CD4-positive, alpha-beta T cell (primary cell): ENCODE measurements at regions of chr17 and their contacts with region 1.

Region 1: GRCh38 chr17:64145757-64146417 is 15.9 kb upstream of the ERN1 start:
- DNase-seq: peak; percentile 91 to 99 (median 95)
- ATAC-seq: peak; percentile 88
- H3K4me3 ChIP-seq: peak overlapping the region; percentile 78
- H3K4me3 Mint-ChIP-seq: no peak overlapping the region
- H3K27ac ChIP-seq: peak overlapping the region; percentile 73 to 91
- H3K27ac Mint-ChIP-seq: no peak overlapping the region
- H3K4me1 ChIP-seq: peaks cover 21% of the 10 kb centered on the region
- H3K4me1 Mint-ChIP-seq: peaks cover 19% of the 10 kb centered on the region
- H3K27me3 ChIP-seq: no peaks in the 10 kb centered on the region
- H3K27me3 Mint-ChIP-seq: no peaks in the 10 kb centered on the region
- CTCF ChIP-seq: no peak

Region 2: DNA sequence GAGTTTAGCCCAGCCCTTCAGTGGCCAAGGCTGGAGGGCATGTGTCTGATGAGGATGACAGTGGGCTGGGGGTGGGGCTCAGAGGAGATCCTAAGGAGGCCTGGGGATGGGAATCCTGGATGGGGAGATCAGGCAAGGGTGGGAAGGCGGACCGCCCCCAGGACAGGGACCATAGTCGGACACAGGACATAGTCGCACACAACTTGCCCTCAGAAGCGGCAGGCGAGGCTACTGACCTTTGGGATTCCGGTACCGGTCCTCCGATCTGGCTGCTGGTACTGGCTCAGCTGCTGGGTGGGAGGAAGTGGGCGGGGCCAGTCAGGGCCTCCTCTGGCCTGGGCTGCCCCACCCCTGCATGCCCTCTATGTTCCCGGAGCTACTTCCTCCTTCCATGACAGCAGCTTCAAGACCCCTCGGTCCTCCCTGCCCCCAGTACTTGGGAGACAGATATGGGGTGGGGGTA is 214.8 kb before region 1 on chr17:
- CTCF ChIA-PET with region 1: no interaction called
- POLR2A ChIA-PET with region 1: interaction called, 20 read pairs
- intact Hi-C with region 1: no loop called
- DNase-seq: peak; percentile 24 to 85 (median 60)
- ATAC-seq: peak; percentile 78
- H3K4me3 ChIP-seq: peak overlapping the region; percentile 69
- H3K4me3 Mint-ChIP-seq: peak overlapping the region; percentile 92
- H3K27ac ChIP-seq: peak overlapping the region; percentile 60 to 63
- H3K27ac Mint-ChIP-seq: peak overlapping the region; percentile 92
- H3K4me1 ChIP-seq: peaks cover 33% of the 10 kb centered on the region
- H3K4me1 Mint-ChIP-seq: peaks cover 26% of the 10 kb centered on the region
- H3K27me3 ChIP-seq: no peaks in the 10 kb centered on the region
- H3K27me3 Mint-ChIP-seq: no peaks in the 10 kb centered on the region
- CTCF ChIP-seq: no peak

Region 3: DNA sequence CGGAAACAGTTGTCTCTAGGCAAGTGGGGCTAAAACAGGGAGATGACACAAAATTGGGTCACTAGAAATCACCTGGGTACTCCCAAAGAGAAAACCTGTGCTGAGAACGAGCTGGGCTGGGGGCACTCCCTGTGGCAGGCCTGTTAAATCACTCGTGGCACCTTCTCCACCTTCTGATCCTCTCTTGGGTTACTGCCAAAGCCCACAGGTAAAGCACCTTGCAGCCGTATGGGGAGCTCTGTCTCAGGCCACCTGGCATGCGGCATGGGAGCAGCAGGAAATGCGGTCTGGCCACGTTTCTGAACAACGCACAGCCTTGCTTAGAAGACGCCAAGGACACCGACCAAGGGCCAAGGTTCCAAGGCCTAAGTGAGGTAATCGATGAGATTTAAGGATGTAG is 104.0 kb before region 1 on chr17:
- CTCF ChIA-PET with region 1: interaction called, 3 read pairs
- POLR2A ChIA-PET with region 1: interaction called, 19 read pairs
- intact Hi-C with region 1: no loop called
- DNase-seq: peak in 1 of 14 experiments; percentile 53
- ATAC-seq: peak; percentile 48
- H3K4me3 ChIP-seq: no peak overlapping the region
- H3K4me3 Mint-ChIP-seq: no peak overlapping the region
- H3K27ac ChIP-seq: no peak overlapping the region
- H3K27ac Mint-ChIP-seq: peak overlapping the region; percentile 72
- H3K4me1 ChIP-seq: peaks cover 25% of the 10 kb centered on the region
- H3K4me1 Mint-ChIP-seq: peaks cover 11% of the 10 kb centered on the region
- H3K27me3 ChIP-seq: no peaks in the 10 kb centered on the region
- H3K27me3 Mint-ChIP-seq: no peaks in the 10 kb centered on the region
- CTCF ChIP-seq: no peak

Region 4: DNA sequence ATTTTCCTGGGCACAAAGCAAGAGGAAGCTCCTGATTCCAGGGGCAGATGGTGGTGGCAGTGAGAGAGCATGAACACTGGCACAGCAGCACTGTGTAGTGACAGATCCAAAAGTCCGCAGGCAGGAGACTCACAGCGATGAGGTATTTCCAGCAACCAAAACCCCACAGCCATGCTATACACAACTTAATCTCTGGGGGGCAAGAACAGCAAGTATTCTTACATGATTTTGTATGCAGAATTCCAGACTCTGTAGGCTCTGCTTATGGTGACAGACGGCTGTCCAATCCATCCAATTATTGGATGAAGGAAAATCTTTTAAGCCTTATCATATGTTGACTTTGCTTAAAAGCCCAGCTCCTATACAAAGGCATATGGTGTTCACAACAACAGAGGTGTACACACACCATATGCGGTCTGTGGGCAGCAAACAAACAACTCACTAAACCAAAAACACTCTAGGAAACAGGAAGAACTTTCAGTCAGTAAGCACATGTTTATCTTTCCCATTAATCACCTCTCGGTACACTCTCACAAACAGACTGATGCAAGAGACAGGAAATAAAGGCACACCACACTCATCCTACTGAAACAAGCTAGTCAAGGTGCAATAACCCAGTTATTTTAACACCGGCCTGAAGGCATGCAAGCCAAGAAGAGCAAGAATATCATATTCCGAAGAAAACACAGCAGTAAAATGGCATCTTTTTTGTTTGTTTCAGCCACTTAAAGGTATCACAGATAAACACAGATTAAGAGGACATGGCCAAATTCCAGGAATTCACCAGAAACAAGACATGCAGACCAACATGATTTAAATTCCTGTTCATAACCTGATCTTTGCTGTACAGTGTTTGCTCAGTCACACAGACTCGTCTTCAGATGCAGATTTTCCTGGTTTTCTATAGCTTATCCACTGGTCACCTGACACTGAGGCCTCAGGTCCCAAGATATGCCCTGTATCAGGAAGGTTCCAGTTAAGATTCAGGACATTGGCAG is 63.8 kb before region 1 on chr17:
- CTCF ChIA-PET with region 1: no interaction called
- POLR2A ChIA-PET with region 1: interaction called, 30 read pairs
- intact Hi-C with region 1: no loop called
- DNase-seq: peak in 8 of 14 experiments; percentile 12 to 84 (median 30)
- ATAC-seq: peak; percentile 83
- H3K4me3 ChIP-seq: peak overlapping the region; percentile 11
- H3K4me3 Mint-ChIP-seq: peak overlapping the region; percentile 50
- H3K27ac ChIP-seq: peak overlapping the region in 1 of 2 donors; percentile 67
- H3K27ac Mint-ChIP-seq: no peak overlapping the region
- H3K4me1 ChIP-seq: peaks cover 64% of the 10 kb centered on the region
- H3K4me1 Mint-ChIP-seq: peaks cover 27% of the 10 kb centered on the region
- H3K27me3 ChIP-seq: no peaks in the 10 kb centered on the region
- H3K27me3 Mint-ChIP-seq: no peaks in the 10 kb centered on the region
- CTCF ChIP-seq: peak; percentile 28

Region 5: GRCh38 chr17:64166876-64167275 is 21.0 kb after region 1 on chr17:
- CTCF ChIA-PET with region 1: no interaction called
- POLR2A ChIA-PET with region 1: interaction called, 23 read pairs
- intact Hi-C with region 1: no loop called
- DNase-seq: no peak
- ATAC-seq: no peak
- H3K4me3 ChIP-seq: no peak overlapping the region
- H3K4me3 Mint-ChIP-seq: no peak overlapping the region
- H3K27ac ChIP-seq: no peak overlapping the region
- H3K27ac Mint-ChIP-seq: no peak overlapping the region
- H3K4me1 ChIP-seq: no peaks in the 10 kb centered on the region
- H3K4me1 Mint-ChIP-seq: peaks cover 2% of the 10 kb centered on the region
- H3K27me3 ChIP-seq: no peaks in the 10 kb centered on the region
- H3K27me3 Mint-ChIP-seq: no peaks in the 10 kb centered on the region
- CTCF ChIP-seq: no peak

Region 6: GRCh38 chr17:64506576-64507477 is 360.9 kb after region 1 on chr17 and contains the start of gene CEP95:
- CTCF ChIA-PET with region 1: no interaction called
- POLR2A ChIA-PET with region 1: interaction called, 61 read pairs
- intact Hi-C with region 1: loop called in 1 of 2 experiments (anchors 10 kb)
- DNase-seq: peak; percentile 89 to 98 (median 94)
- ATAC-seq: peak; percentile 44
- H3K4me3 ChIP-seq: peak within 1 kb of the TSS; percentile 90
- H3K4me3 Mint-ChIP-seq: peak within 1 kb of the TSS; percentile 99
- H3K27ac ChIP-seq: peak within 1 kb of the TSS; percentile 99 to 100
- H3K27ac Mint-ChIP-seq: peak within 1 kb of the TSS; percentile 99
- H3K4me1 ChIP-seq: peaks cover 28% of the 10 kb centered on the region
- H3K4me1 Mint-ChIP-seq: peaks cover 61% of the 10 kb centered on the region
- H3K27me3 ChIP-seq: no peaks in the 10 kb centered on the region
- H3K27me3 Mint-ChIP-seq: no peaks in the 10 kb centered on the region
- CTCF ChIP-seq: no peak
- total RNA-seq, gene CEP95: 256 to 269 TPM